Adrenal gland (tissue), 19 donors: ENCODE measurements at regions of chr13 and their contacts with region 1.

Region 1: GRCh38 chr13:110915057-110915873 is at the start of gene ANKRD10:
- DNase-seq: peak; percentile 99
- H3K4me3 ChIP-seq: peak within 1 kb of the TSS; percentile 18 to 89 (median 81)
- H3K27ac ChIP-seq: peak within 1 kb of the TSS; percentile 88 to 99 (median 98)
- H3K4me1 ChIP-seq: peaks cover 14 to 44% of the 10 kb centered on the region in 2 donors
- H3K27me3 ChIP-seq: no peaks in the 10 kb centered on the region
- CTCF ChIP-seq: peak; percentile 71 to 97 (median 84)
- POLR2A ChIP-seq: peak; percentile 40 to 45
- total RNA-seq, gene ANKRD10: 50.1 to 159 (median 99.0) TPM

Region 2: DNA sequence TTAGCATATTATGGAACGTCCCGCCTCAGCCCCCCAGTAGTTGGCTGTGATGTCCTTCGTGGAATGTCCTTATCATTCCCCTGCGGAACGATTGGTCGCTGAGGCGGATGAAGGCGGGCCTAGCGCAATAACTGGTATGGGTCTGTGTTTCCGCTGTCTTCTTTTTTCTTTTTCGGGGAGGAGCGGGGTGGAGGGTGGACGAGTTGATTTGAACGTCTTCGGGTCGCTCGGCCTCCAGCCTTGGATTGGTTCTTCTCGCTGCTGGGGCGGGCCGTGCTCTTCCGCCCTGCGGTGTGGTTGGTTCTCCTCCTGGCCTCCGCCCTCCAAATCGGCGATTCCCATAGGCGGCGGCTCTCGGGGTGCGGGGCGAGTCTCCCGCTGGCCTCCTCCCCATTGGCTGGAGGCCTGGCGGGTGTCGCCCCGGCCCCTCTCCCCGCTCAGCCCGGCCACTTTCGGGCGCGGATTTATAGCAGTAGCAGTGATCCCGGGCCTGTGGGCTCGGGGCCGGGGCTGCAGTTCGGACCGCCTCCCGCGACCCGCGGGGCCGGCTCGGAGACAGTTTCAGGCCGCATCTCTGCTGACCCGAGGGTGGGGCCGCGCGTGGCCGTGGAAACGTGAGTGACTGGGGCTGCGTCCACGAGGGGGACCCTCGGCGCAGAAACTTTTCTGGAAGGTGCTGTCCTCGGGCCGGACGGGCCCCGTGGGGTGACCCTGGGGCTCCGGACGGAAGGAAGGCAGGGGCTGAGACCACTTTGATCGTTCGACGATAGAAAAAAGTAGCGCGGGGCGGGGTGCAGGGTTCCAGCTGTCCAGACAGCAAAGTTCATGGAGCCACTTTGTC is 199.7 kb before region 1 on chr13:
- intact Hi-C with region 1: loop called in 1 of 2 experiments (anchors 10 kb)
- DNase-seq: peak; percentile 97 to 100 (median 99)
- H3K4me3 ChIP-seq: peak overlapping the region; percentile 76 to 87 (median 82)
- H3K27ac ChIP-seq: peak overlapping the region; percentile 95 to 100 (median 99)
- H3K4me1 ChIP-seq: peaks cover 6 to 30% of the 10 kb centered on the region in 2 donors
- H3K27me3 ChIP-seq: no peaks in the 10 kb centered on the region
- CTCF ChIP-seq: peak in 2 of 6 experiments; percentile 25 to 38
- POLR2A ChIP-seq: peak; percentile 50 to 83